H1 (cell line): ENCODE measurements at regions of chr2 and their contacts with region 1.

Region 1: DNA sequence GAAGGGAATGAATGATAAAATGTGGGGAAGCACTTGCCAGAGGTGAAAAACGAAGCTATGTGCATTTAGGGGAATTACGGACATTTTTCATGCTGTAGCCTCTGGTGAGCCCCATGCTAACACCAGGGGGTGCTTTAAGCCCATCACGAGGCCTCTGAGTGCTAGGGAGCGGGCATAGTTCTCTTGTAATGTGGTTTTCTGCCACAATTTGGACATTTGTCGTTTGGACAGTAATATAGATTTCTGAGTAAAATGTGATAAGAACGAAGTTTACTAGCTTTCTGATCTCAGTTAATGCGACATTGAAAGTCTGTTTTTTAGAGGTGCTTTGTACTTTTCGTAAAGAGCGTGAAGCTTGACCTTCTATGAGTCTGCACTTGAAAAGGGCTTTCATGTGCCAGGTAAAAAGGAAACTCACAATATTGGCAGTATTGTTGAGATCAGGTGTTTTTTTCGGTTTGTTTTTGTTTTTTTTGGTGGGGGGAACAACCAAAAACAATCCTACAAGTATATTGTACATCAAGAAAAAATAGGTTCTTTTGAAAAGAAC is 50.6 kb downstream of the TRAF3IP1 start:
- DNase-seq: no peak
- H3K4me3 ChIP-seq: no peak overlapping the region
- H3K27ac ChIP-seq: no peak overlapping the region
- H3K4me1 ChIP-seq: no peaks in the 10 kb centered on the region
- H3K27me3 ChIP-seq: no peaks in the 10 kb centered on the region
- CTCF ChIP-seq: peak; percentile 63 to 85 (median 77)
- EP300 ChIP-seq: no peak
- POLR2A ChIP-seq: no peak
- RAD21 ChIP-seq: peak; percentile 88 to 91

Region 2: GRCh38 chr2:238404406-238405216 is 33.7 kb after region 1 on chr2:
- CTCF ChIA-PET with region 1: interaction called, 11 read pairs
- POLR2A ChIA-PET with region 1: no interaction called
- DNase-seq: no peak
- H3K4me3 ChIP-seq: no peak overlapping the region
- H3K27ac ChIP-seq: no peak overlapping the region
- H3K4me1 ChIP-seq: peaks cover 0 to 11% (median 4%) of the 10 kb centered on the region in 4 experiments; a peak in 5 of 7 replicates
- H3K27me3 ChIP-seq: no peaks in the 10 kb centered on the region
- CTCF ChIP-seq: no peak
- EP300 ChIP-seq: no peak
- POLR2A ChIP-seq: no peak
- RAD21 ChIP-seq: no peak

Region 3: GRCh38 chr2:238433941-238434845 is 63.3 kb after region 1 on chr2:
- CTCF ChIA-PET with region 1: interaction called, 68 read pairs
- POLR2A ChIA-PET with region 1: interaction called, 3 read pairs
- DNase-seq: no peak
- H3K4me3 ChIP-seq: no peak overlapping the region
- H3K27ac ChIP-seq: no peak overlapping the region
- H3K4me1 ChIP-seq: no peaks in the 10 kb centered on the region
- H3K27me3 ChIP-seq: no peaks in the 10 kb centered on the region
- CTCF ChIP-seq: no peak
- EP300 ChIP-seq: no peak
- POLR2A ChIP-seq: no peak
- RAD21 ChIP-seq: no peak

Region 4: GRCh38 chr2:238459081-238459629 is 88.3 kb after region 1 on chr2:
- CTCF ChIA-PET with region 1: interaction called, 52 read pairs
- POLR2A ChIA-PET with region 1: no interaction called
- DNase-seq: no peak
- H3K4me3 ChIP-seq: no peak overlapping the region
- H3K27ac ChIP-seq: no peak overlapping the region
- H3K4me1 ChIP-seq: no peaks in the 10 kb centered on the region
- H3K27me3 ChIP-seq: 0 out of 7 replicates have a peak, but pooled peaks cover 0 to 4% (median 0%) of the 10 kb centered on the region in 4 experiments
- CTCF ChIP-seq: no peak
- EP300 ChIP-seq: no peak
- POLR2A ChIP-seq: no peak
- RAD21 ChIP-seq: no peak